ENCODE measurements at regions of chr5 and their contacts with region 1.

Region 1: GRCh38 chr5:145378226-145378625 is 456.9 kb downstream of the PRELID2 start:
- DNase-seq: no peak
- H3K4me3 ChIP-seq: no peak overlapping the region
- H3K27ac ChIP-seq: no peak overlapping the region
- H3K4me1 ChIP-seq: no peaks in the 10 kb centered on the region
- H3K27me3 ChIP-seq: no peaks in the 10 kb centered on the region
- CTCF ChIP-seq: no peak
- EP300 ChIP-seq: no peak
- POLR2A ChIP-seq: no peak

Region 2: GRCh38 chr5:145294331-145294730 is 83.9 kb before region 1 on chr5:
- intact Hi-C with region 1: no loop called
- DNase-seq: no peak
- H3K4me3 ChIP-seq: no peak overlapping the region
- H3K27ac ChIP-seq: no peak overlapping the region
- H3K4me1 ChIP-seq: no peaks in the 10 kb centered on the region
- H3K27me3 ChIP-seq: no peaks in the 10 kb centered on the region
- CTCF ChIP-seq: no peak
- EP300 ChIP-seq: no peak
- POLR2A ChIP-seq: no peak

Region 3: DNA sequence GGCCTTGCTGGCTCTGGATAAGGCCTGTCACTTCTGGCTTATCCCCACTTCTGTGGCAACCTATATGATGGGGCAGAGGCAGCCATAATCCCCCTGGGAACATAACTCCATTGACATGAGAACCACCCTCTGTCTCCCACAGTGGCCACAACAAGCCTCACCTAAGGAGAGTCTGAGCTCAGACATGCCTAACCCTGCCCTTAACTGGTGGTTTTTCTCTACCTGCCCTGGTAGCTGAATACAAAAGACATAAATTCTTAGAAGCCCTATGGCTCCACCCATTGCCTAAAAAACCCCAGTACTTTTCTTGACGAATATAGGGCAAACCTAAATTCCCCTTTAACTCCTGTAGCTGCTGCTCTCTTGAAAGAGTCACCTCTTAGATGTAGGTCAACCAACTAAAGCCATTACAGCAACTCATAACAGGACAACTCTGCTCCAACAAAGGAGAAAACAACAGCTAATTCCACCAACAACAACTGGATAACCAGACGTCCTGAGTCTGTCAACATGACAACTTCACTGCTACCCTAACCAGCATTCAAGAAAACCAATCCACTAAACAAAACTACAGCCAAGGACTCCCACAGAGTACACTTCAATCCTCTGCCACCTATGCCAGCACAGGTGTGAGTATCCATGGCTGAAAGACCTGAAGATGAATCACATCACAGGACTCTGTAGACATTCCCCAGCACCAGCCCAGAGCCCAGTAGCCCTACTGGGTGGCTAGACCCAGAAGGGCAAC is 29.2 kb after region 1 on chr5:
- intact Hi-C with region 1: loop called (anchors 2 kb)
- DNase-seq: no peak
- H3K4me3 ChIP-seq: no peak overlapping the region
- H3K27ac ChIP-seq: no peak overlapping the region
- H3K4me1 ChIP-seq: no peaks in the 10 kb centered on the region
- H3K27me3 ChIP-seq: no peaks in the 10 kb centered on the region
- CTCF ChIP-seq: no peak
- EP300 ChIP-seq: no peak
- POLR2A ChIP-seq: no peak

Region 4: GRCh38 chr5:145428076-145428475 is 49.9 kb after region 1 on chr5:
- intact Hi-C with region 1: no loop called
- DNase-seq: no peak
- H3K4me3 ChIP-seq: no peak overlapping the region
- H3K27ac ChIP-seq: no peak overlapping the region
- H3K4me1 ChIP-seq: no peaks in the 10 kb centered on the region
- H3K27me3 ChIP-seq: no peaks in the 10 kb centered on the region
- CTCF ChIP-seq: no peak
- EP300 ChIP-seq: no peak
- POLR2A ChIP-seq: no peak

Region 5: DNA sequence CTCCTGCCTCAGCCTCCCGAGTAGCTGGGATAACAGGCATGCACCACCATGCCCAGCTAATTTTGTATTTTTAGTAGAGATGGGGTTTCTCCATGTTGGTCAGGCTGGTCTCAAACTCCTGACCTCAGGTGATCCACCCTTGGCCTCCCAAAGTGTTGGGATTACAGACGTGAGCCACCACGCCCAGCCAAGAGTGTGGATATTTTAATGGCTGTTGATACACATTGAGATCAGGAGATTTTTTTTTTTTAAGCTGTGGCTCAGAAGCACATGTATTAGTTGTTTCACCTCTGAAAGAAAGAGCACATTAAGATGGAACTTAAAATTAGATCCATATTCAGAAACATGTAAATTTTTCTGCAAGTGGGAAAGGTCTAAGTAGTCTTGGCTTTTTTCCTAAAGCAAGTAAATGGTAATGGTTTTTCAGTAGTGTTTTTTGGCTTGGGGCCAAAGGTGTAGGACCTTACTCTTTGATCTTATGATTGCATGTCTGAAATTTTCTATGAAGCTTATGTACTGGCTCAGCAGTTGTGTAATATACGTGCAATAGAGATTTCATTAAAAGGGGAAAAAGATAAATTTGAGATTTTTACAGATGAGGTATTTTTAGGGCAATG is 835.1 kb after region 1 on chr5:
- intact Hi-C with region 1: no loop called
- DNase-seq: no peak
- H3K4me3 ChIP-seq: no peak overlapping the region
- H3K27ac ChIP-seq: no peak overlapping the region
- H3K4me1 ChIP-seq: peaks cover 15 to 44% (median 40%) of the 10 kb centered on the region in 4 donors
- H3K27me3 ChIP-seq: no peaks in the 10 kb centered on the region
- CTCF ChIP-seq: no peak
- EP300 ChIP-seq: no peak
- POLR2A ChIP-seq: no peak